ENCODE measurements at regions of chr20 and their contacts with region 1.

Region 1: GRCh38 chr20:38057351-38057972 is 23.9 kb downstream of the RPRD1B start:
- DNase-seq: no peak
- ATAC-seq: peak; percentile 96
- H3K4me3 ChIP-seq: no peak overlapping the region
- H3K27ac ChIP-seq: no peak overlapping the region
- H3K4me1 ChIP-seq: peaks cover 19% of the 10 kb centered on the region
- H3K27me3 ChIP-seq: no peaks in the 10 kb centered on the region
- CTCF ChIP-seq: peak; percentile 79 to 87 (median 84)
- EP300 ChIP-seq: no peak
- POLR2A ChIP-seq: no peak
- RAD21 ChIP-seq: peak; percentile 91

Region 2: DNA sequence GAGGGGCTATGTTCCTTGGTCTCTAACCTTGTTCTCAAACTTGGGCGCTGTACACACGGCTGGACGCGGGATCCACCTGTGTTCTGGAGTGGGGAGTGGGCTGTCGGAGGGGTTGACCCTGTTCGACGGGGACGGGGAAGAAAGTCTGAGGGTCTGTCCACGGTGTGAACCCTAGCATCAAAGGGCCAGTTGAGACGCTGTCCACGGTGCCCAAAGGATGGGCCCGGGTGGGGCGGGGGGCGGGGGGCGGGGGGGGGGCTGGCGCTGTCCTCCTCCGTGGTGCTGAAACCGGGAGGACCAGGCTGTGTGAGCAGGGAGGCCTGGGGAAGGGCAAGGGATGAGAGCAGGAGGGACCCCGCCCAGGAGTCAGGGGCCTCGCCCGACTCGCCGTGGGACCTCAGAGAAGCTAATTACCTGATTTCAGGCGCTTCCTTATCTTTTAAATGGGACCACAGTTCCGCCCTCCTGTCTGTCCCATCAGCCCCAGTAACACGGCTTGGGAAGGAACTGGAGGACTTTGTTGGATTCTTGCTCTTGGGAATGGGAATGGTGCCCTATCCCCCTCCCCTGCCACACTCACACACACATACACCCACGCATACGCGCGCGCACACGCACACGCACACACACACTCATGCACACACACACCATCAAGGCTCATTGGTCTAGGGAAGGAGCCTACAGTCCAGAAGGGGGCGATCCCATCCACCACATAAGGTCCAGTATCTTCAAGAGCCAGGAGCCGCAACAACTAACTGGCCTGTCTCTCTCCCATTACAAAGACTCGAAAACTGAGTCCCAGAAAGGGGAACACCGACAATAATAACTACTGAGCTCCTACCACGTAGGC is 155.6 kb before region 1 on chr20:
- CTCF ChIA-PET with region 1: no interaction called
- POLR2A ChIA-PET with region 1: no interaction called
- RAD21 ChIA-PET with region 1: no interaction called
- SMC1A ChIA-PET with region 1: interaction called, 3 read pairs
- in situ Hi-C with region 1: no loop called
- intact Hi-C with region 1: loop called (anchors 5 kb)
- DNase-seq: no peak
- ATAC-seq: peak; percentile 94
- H3K4me3 ChIP-seq: peak overlapping the region; percentile 61; the same call in 1 of the 2 replicates
- H3K27ac ChIP-seq: no peak overlapping the region
- H3K4me1 ChIP-seq: no peaks in the 10 kb centered on the region; the same call in 1 of the 2 replicates
- H3K27me3 ChIP-seq: peaks cover 1 to 4% of the 10 kb centered on the region in 2 experiments; a peak in 1 of 4 replicates
- CTCF ChIP-seq: peak; percentile 69 to 75 (median 72)
- EP300 ChIP-seq: no peak
- POLR2A ChIP-seq: no peak
- RAD21 ChIP-seq: peak; percentile 76

Region 3: DNA sequence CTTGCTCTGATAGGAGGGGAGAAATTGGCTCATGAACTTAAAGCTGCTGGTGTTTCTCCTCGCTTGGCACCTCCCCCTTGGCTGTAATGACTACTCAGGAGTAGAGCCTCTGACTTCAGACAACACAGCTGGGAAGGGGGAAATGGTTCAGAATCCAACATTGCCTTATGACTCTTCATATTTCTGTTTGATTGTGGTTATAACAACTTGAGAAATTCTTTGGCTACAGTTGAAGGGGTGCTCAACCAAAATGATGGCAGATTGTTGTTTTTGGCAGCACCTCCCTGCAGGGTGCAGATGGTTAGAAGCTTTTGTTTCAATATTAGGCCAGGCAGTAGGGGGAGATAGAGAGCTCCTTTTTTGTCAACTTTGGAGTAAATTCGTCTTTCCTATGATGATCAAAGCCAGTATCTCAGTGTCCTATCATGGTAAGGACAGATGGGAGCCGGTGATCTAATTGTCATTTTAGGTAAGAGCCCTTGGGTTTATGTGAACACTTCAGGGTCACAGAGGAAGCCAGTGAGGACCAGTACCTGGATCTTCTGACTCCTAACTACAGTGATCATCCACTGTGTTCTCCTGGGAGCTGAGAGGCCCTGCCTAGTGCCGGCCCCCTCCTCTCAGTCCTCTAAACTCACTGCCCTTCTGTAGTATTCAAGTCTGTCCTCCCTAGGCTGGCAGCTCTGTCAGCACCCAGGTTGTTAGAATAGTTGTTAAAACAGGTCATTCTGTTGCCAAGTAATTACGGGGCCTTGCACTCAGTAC is 16.0 kb after region 1 on chr20:
- CTCF ChIA-PET with region 1: interaction called, 260 read pairs
- POLR2A ChIA-PET with region 1: interaction called, 3 read pairs
- RAD21 ChIA-PET with region 1: interaction called, 35 read pairs
- SMC1A ChIA-PET with region 1: interaction called, 82 read pairs
- in situ Hi-C with region 1: no loop called
- intact Hi-C with region 1: no loop called
- DNase-seq: no peak
- ATAC-seq: peak; percentile 92
- H3K4me3 ChIP-seq: no peak overlapping the region
- H3K27ac ChIP-seq: no peak overlapping the region
- H3K4me1 ChIP-seq: peaks cover 13% of the 10 kb centered on the region
- H3K27me3 ChIP-seq: no peaks in the 10 kb centered on the region
- CTCF ChIP-seq: peak; percentile 62 to 75 (median 71)
- EP300 ChIP-seq: no peak
- POLR2A ChIP-seq: no peak
- RAD21 ChIP-seq: peak; percentile 77

Region 4: GRCh38 chr20:38113401-38114325 is 56.2 kb after region 1 on chr20:
- CTCF ChIA-PET with region 1: interaction called, 58 read pairs
- POLR2A ChIA-PET with region 1: no interaction called
- RAD21 ChIA-PET with region 1: interaction called, 12 read pairs
- SMC1A ChIA-PET with region 1: interaction called, 13 read pairs
- in situ Hi-C with region 1: no loop called
- intact Hi-C with region 1: no loop called
- DNase-seq: no peak
- ATAC-seq: peak; percentile 78
- H3K4me3 ChIP-seq: no peak overlapping the region
- H3K27ac ChIP-seq: no peak overlapping the region
- H3K4me1 ChIP-seq: 0 out of 2 replicates have a peak, but pooled peaks cover 3% of the 10 kb centered on the region
- H3K27me3 ChIP-seq: no peaks in the 10 kb centered on the region
- CTCF ChIP-seq: peak; percentile 18 to 32 (median 25); a peak in 4 of 6 replicates
- EP300 ChIP-seq: no peak
- POLR2A ChIP-seq: no peak
- RAD21 ChIP-seq: peak; percentile 54

Region 5: GRCh38 chr20:38165089-38165989 is 107.9 kb after region 1 on chr20 and contains the start of gene TGM2:
- CTCF ChIA-PET with region 1: interaction called, 31 read pairs
- POLR2A ChIA-PET with region 1: interaction called, 3 read pairs
- RAD21 ChIA-PET with region 1: interaction called, 12 read pairs
- SMC1A ChIA-PET with region 1: interaction called, 10 read pairs
- in situ Hi-C with region 1: loop called (anchors 25 kb)
- intact Hi-C with region 1: loop called (anchors 1 kb)
- DNase-seq: peak; percentile 32
- ATAC-seq: peak; percentile 97
- H3K4me3 ChIP-seq: peak within 1 kb of the TSS; percentile 25; the same call in 1 of the 2 replicates
- H3K27ac ChIP-seq: no peak within 1 kb of the TSS
- H3K4me1 ChIP-seq: peaks cover 17% of the 10 kb centered on the region
- H3K27me3 ChIP-seq: no peaks in the 10 kb centered on the region
- CTCF ChIP-seq: peak; percentile 80 to 88 (median 85)
- EP300 ChIP-seq: no peak
- POLR2A ChIP-seq: no peak
- RAD21 ChIP-seq: peak; percentile 87
- polyA plus RNA-seq, gene TGM2: 0.11 to 0.16 TPM

Region 6: DNA sequence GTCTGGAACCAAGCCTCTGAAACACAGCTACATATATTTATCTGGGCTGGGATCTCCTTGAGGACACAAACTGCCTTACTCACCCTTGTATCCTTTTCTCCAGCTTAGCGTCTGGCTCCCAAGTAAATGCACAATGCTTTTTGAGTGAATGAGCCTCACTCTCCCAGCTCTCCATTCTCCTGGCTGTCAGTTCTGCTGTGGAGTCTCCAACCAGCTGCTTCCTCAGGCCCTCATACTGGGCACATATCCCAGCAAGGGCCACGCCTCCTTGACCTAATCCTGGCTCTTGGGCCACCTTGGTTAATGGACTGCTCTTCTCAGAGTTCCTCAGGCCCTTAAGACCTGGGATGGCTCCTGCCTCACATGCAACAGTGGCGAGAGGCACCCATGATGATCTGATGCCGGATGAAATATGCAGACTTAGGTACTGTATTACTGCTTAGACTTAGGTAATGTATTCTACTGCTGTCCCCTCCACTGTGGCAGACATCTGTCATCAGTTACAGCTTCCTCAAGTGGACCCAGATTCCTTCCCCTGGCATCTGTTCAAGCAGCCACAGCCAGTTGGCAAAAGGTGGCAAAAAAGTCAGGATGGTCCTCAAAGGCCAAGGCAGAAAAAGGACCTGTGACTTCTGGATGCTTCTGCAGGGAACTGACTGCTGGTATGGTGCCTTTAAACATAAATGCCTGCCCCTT is 361.2 kb after region 1 on chr20:
- CTCF ChIA-PET with region 1: interaction called, 3 read pairs
- POLR2A ChIA-PET with region 1: no interaction called
- RAD21 ChIA-PET with region 1: no interaction called
- SMC1A ChIA-PET with region 1: no interaction called
- in situ Hi-C with region 1: loop called (anchors 10 kb)
- intact Hi-C with region 1: no loop called
- DNase-seq: no peak
- ATAC-seq: peak; percentile 18
- H3K4me3 ChIP-seq: no peak overlapping the region
- H3K27ac ChIP-seq: no peak overlapping the region
- H3K4me1 ChIP-seq: no peaks in the 10 kb centered on the region
- H3K27me3 ChIP-seq: no peaks in the 10 kb centered on the region
- CTCF ChIP-seq: no peak
- EP300 ChIP-seq: no peak
- POLR2A ChIP-seq: peak; percentile 71
- RAD21 ChIP-seq: no peak